CD8-positive, alpha-beta memory T cell (primary cell): ENCODE measurements at regions of chr2 and their contacts with region 1.

Region 1: DNA sequence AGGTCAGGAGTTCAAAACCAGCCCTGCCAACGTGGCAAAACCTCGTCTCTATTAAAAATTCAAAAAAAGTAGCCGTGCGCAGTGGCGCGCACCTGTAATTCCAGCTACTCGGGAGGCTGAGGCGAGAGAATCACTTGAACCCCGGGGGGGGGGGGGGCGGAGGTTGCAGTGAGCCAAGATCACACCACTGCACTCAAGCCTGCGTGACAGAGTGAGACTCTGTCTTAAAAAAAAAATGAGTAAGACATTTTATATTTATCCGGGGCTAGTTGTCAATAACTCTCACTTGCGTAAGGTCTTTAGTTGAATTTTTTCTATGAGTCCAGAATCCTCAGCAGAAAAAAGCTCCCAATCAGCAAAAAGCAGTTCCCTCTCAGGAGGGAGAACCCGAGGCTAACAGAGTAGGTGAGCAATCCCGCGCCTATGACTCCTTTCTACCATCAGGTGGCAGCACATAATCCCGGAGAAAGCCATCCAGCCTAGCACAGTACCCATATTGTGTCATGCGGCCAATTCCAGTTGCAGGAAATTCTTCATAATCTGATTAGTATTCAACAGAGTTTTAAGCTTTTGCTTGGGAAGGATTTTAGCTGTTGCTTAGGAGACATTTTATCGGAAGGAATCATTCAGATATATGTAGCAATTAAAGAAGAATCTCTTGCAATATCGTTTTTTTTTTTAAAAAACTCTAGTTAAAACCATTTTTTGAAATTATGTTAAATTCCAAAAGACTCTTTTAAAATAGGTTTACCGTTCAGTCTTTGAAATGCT is 11.9 kb upstream of the CRYGA start:
- DNase-seq: peak; percentile 21 to 66 (median 37)
- H3K4me3 ChIP-seq: no peak overlapping the region
- H3K4me3 Mint-ChIP-seq: no peak overlapping the region
- H3K27ac ChIP-seq: no peak overlapping the region
- H3K27ac Mint-ChIP-seq: peak overlapping the region in 1 of 8 donors; percentile 73
- H3K4me1 ChIP-seq: no peaks in the 10 kb centered on the region
- H3K4me1 Mint-ChIP-seq: peaks cover 4 to 6% (median 4%) of the 10 kb centered on the region in 3 donors
- H3K27me3 ChIP-seq: peaks cover 6% of the 10 kb centered on the region
- H3K27me3 Mint-ChIP-seq: peaks cover 7 to 37% of the 10 kb centered on the region in 2 donors

Region 2: DNA sequence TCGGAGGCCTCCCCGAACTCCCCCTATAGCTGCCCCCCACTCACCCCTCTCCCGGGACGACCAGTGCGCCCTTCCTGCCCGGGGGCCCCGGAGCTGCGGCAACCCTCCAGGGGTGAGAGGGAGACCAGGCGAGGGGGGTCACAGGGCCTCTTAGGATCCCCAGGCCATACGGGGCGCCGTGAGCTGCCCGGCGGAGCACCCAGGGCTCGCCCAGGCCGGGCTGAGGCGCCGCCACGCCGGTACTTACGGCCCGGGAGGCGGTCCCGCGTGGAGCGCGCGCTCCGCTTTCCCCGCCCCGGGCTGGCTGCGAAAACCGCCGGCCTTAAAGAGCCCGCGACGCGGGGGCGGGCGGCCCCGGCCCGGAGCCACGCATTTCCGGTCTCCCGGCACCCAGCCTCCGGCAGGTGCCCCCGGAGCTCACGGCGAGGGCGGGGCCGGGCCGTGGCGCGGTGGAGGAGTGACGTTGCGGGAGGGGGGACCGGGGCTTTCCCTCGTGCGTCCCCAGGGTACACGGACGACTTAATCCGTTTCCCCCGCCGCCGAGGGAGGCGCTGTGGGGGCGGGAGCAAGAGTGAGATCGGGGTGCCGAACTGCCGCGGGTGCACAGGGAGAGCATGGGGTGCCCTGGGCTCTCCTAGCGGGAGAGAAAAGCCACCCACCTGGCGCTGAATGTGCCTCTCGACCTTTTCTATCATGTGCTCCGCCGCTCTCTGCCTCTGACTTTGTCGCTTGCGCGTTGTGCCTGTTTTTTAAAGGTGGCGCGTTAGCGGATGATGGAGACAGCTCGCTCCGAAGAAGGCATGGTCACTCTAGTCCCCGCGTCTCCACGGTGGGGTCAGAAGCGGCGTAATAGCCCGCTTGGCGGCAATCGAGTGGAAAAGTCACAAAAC is 550.0 kb before region 1 on chr2 and contains the start of gene METTL21A:
- CTCF ChIA-PET with region 1: no interaction called
- POLR2A ChIA-PET with region 1: no interaction called
- DNase-seq: peak; percentile 90 to 97 (median 96)
- H3K4me3 ChIP-seq: peak within 1 kb of the TSS; percentile 98
- H3K4me3 Mint-ChIP-seq: peak within 1 kb of the TSS; percentile 93 to 100 (median 96)
- H3K27ac ChIP-seq: peak within 1 kb of the TSS; percentile 95
- H3K27ac Mint-ChIP-seq: peak within 1 kb of the TSS; percentile 93 to 99 (median 96)
- H3K4me1 ChIP-seq: peaks cover 26% of the 10 kb centered on the region
- H3K4me1 Mint-ChIP-seq: peaks cover 28 to 48% (median 35%) of the 10 kb centered on the region in 3 donors
- H3K27me3 ChIP-seq: no peaks in the 10 kb centered on the region
- H3K27me3 Mint-ChIP-seq: peaks cover 0 to 3% of the 10 kb centered on the region in 2 donors
- total RNA-seq, gene METTL21A: 31.5 to 32.8 TPM

Region 3: GRCh38 chr2:208156439-208156838 is 18.8 kb before region 1 on chr2:
- CTCF ChIA-PET with region 1: interaction called, 10 read pairs
- POLR2A ChIA-PET with region 1: no interaction called
- DNase-seq: no peak
- H3K4me3 ChIP-seq: no peak overlapping the region
- H3K4me3 Mint-ChIP-seq: no peak overlapping the region
- H3K27ac ChIP-seq: no peak overlapping the region
- H3K27ac Mint-ChIP-seq: no peak overlapping the region
- H3K4me1 ChIP-seq: no peaks in the 10 kb centered on the region
- H3K4me1 Mint-ChIP-seq: no peaks in the 10 kb centered on the region
- H3K27me3 ChIP-seq: no peaks in the 10 kb centered on the region
- H3K27me3 Mint-ChIP-seq: peaks cover 4 to 9% of the 10 kb centered on the region in 2 donors